AG04449 (cell line): ENCODE measurements at regions of chr5 and their contacts with region 1.

Region 1: DNA sequence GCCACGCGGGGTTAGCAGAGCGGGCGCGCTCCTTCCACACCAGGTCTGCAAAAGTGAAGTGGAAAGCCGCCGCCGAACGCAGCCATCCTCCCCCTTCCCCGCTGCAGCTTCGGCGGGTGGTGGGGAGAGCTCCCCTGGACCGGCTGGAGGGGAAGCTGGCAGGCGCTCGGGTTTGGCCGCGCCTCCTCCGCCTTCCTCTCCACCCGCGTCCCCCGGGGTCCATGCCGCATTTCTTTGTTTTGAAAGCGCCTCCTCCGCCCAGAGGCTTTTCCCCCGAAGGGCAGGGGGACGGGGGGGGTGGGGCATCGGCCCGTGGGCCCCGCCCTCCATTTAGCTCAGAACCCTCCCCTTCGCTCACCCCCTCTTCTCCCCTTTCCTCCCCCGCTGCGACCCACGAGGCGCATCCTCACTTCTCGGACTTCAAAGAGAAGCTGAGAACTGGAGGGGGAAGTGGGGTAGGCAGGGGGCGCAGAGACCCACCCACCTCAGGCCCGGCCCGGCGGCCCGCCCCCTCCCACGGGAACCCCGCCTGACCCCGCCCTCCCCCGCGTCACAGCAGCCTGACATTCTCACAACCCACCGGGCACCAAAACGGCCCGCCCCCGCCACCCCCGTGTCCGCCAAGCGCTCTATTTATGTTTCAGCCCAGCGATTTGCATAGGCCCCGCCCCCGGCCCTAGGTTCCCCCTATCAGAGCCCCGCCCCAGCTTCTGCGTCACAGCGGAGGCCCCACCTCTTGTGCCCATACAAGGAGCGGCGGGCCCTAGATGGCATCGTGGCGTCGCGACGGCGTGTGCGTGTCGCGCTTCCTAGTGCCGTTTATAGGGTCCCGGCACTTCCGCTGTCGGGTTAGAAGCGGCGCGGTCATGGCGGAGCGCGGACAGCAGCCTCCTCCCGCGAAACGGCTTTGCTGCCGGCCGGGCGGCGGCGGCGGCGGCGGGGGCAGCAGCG is at the start of gene ZSWIM6:
- DNase-seq: peak; percentile 97
- H3K4me3 ChIP-seq: peak within 1 kb of the TSS; percentile 92
- CTCF ChIP-seq: no peak

Region 2: GRCh38 chr5:60903356-60903755 is 428.3 kb before region 1 on chr5:
- CTCF ChIA-PET with region 1: no interaction called
- POLR2A ChIA-PET with region 1: no interaction called
- DNase-seq: no peak
- H3K4me3 ChIP-seq: no peak overlapping the region
- CTCF ChIP-seq: no peak

Region 3: DNA sequence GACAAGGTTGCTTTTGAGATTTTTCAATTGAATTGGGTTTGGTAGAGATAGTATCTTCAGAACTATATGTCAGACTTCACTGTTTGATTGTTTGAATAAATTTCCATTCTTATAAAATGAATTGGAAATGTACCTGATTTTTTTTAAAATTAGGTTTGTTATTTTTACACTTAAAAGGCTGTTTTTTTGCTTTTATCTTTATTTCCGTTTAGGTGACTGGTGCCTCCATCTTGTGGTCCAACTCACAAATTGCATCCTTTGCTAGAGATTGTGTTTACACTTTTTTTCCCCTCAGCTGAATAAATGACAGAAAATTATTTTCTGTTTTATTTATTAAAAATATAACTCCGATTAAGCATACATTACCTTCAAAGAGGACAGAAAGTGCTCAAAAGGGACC is 371.1 kb before region 1 on chr5:
- CTCF ChIA-PET with region 1: interaction called, 16 read pairs
- POLR2A ChIA-PET with region 1: no interaction called
- DNase-seq: no peak
- H3K4me3 ChIP-seq: no peak overlapping the region
- CTCF ChIP-seq: peak; percentile 23

Region 4: DNA sequence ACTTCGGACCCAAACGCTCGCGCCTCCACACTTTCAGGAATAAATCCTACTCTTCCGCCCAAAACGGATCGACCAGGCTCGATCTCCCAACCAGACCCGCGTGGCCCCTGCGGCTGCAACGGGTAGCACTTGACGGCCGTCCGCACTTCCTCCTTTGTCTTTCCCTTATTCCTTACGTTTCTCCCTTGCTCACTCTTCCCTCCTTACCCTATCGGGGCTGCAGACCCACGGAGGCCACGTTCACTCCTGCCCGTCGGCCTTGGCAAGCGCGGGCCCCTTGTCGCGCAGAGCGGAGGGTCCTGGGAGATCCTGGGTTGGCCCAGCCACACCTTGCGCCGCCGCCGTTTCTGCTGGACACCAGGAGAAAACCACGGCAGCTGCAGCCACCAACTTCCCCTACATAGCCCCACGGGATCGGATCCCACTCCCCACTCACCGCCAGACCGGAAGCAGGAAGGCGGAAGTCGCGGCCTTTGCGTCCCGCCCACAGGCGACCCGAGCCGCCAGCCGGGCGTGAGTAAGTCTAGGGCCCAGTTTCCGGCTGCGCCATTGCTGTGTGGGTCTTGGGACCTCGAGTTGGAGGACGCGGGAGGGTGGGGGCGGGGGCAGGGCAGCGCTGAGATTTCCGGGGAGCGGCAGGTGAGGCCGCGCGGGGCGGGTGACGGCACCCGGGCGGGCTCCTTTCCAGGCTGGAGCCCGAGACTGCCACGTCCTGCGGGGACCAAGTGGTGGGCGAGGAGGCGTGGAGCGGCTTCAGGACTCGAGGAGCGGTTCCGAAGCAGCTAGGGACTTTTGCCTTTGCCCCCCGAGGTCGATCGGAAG is 169.5 kb before region 1 on chr5 and contains the start of gene SMIM15:
- CTCF ChIA-PET with region 1: interaction called, 3 read pairs
- POLR2A ChIA-PET with region 1: interaction called, 20 read pairs
- DNase-seq: peak; percentile 34
- H3K4me3 ChIP-seq: peak within 1 kb of the TSS; percentile 83
- CTCF ChIP-seq: no peak

Region 5: DNA sequence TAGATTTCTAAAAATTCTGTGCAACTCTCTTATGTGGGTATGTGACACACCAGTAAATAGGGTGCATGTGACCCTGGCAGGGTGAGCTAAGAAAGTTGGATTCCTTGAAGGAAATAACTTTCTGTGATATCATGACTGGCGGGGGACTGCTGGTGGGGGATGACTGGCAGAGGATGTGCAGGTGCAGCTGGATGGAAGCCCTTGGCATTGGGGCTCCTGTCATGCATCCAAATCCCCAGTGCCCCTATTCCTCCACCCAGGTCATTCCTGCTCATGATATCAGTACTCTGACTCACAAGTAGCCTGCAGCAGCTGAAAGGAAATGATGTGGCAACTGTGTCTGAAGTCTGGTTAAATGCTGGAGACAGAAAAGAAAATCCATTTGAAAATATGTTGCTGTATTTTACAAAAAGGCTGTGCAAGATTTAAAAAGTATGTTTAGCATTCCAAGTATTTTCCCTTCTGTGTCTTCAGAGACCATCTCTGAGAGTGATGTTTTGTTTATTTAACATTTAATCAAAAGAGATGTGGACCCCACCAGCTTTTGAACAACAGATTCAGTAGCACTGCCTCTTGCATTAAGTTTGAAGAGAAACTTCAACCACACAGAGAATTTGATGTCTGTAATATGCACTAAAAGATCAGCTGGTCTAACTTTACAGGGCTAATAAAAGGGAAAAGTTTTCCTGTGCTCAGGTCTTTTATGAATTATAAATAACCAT is 17.6 kb before region 1 on chr5:
- CTCF ChIA-PET with region 1: interaction called, 13 read pairs
- POLR2A ChIA-PET with region 1: interaction called, 15 read pairs
- DNase-seq: peak; percentile 79
- H3K4me3 ChIP-seq: no peak overlapping the region
- CTCF ChIP-seq: no peak

Region 6: GRCh38 chr5:61658592-61659008 is 326.9 kb after region 1 on chr5:
- CTCF ChIA-PET with region 1: interaction called, 21 read pairs
- POLR2A ChIA-PET with region 1: no interaction called
- DNase-seq: peak; percentile 12
- H3K4me3 ChIP-seq: no peak overlapping the region
- CTCF ChIP-seq: peak; percentile 97